ENCODE measurements at regions of chr1 and their contacts with region 1.

Region 1: GRCh38 chr1:27603681-27604578 is at the start of gene AHDC1:
- DNase-seq: peak; percentile 93
- ATAC-seq: peak; percentile 78
- H3K4me3 ChIP-seq: peak within 1 kb of the TSS; percentile 63 to 90 (median 79)
- H3K4me3 Mint-ChIP-seq: peak within 1 kb of the TSS; percentile 94
- H3K27ac ChIP-seq: peak within 1 kb of the TSS; percentile 32 to 74
- H3K27ac Mint-ChIP-seq: peak within 1 kb of the TSS; percentile 90
- H3K4me1 ChIP-seq: peaks cover 43 to 66% of the 10 kb centered on the region in 2 donors
- H3K4me1 Mint-ChIP-seq: peaks cover 50% of the 10 kb centered on the region
- H3K27me3 ChIP-seq: no peaks in the 10 kb centered on the region
- H3K27me3 Mint-ChIP-seq: no peaks in the 10 kb centered on the region
- CTCF ChIP-seq: no peak
- total RNA-seq, gene AHDC1: 29.9 and 32.0 TPM in 2 replicates

Region 2: GRCh38 chr1:27321813-27322577 is 281.9 kb before region 1 on chr1 and contains the start of gene TMEM222:
- CTCF ChIA-PET with region 1: interaction called, 4 read pairs
- POLR2A ChIA-PET with region 1: no interaction called
- intact Hi-C with region 1: loop called (anchors 1 kb)
- DNase-seq: peak; percentile 98
- ATAC-seq: peak; percentile 96
- H3K4me3 ChIP-seq: peak within 1 kb of the TSS; percentile 80 to 100 (median 98)
- H3K4me3 Mint-ChIP-seq: peak within 1 kb of the TSS; percentile 98
- H3K27ac ChIP-seq: peak within 1 kb of the TSS; percentile 94
- H3K27ac Mint-ChIP-seq: peak within 1 kb of the TSS; percentile 97
- H3K4me1 ChIP-seq: peaks cover 17 to 25% of the 10 kb centered on the region in 2 donors
- H3K4me1 Mint-ChIP-seq: peaks cover 51% of the 10 kb centered on the region
- H3K27me3 ChIP-seq: no peaks in the 10 kb centered on the region
- H3K27me3 Mint-ChIP-seq: peaks cover 12% of the 10 kb centered on the region
- CTCF ChIP-seq: no peak
- total RNA-seq, gene TMEM222: 44.2 and 48.7 TPM in 2 replicates

Region 3: DNA sequence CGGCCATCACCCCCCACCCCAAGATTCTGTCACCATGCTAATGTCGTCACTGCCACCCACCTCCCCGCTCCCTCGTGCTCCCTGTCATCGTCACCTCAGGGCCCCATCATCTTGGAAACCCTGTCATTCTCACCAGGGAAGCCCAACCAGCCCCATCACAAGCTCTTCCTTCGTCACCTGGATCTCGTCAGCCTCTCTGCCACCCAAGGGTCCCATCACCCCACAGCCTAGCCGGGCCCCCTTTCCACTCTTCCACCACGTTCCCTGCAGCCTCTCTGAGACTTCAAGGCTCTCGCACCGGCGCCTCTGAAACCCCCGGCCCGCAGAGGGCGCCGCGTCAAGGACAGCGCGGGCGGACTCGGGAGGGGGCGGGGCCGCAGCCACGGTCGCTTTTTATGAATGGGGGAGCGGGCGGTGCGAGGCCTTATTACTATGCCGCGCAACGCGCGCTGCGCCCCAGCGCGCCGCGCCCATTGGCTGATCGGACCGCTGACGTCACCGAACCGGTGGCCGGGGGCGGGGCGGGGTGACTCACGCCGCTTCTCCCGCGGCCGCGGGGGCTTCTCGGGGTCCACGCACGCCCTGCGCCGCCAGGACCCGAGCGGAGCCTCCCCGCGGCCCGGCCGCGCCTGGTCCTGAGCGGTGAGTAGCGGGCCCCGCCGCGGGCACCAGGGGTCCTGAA is 211.7 kb before region 1 on chr1 and contains the start of gene GPR3:
- CTCF ChIA-PET with region 1: interaction called, 135 read pairs
- POLR2A ChIA-PET with region 1: no interaction called
- intact Hi-C with region 1: loop called (anchors 1 kb)
- DNase-seq: peak; percentile 96
- ATAC-seq: peak; percentile 91
- H3K4me3 ChIP-seq: peak within 1 kb of the TSS in 4 of 5 experiments; percentile 34 to 60 (median 56)
- H3K4me3 Mint-ChIP-seq: peak within 1 kb of the TSS; percentile 81
- H3K27ac ChIP-seq: peak within 1 kb of the TSS in 1 of 2 donors; percentile 50
- H3K27ac Mint-ChIP-seq: peak within 1 kb of the TSS; percentile 67
- H3K4me1 ChIP-seq: peaks cover 12 to 24% of the 10 kb centered on the region in 2 donors
- H3K4me1 Mint-ChIP-seq: peaks cover 22% of the 10 kb centered on the region
- H3K27me3 ChIP-seq: no peaks in the 10 kb centered on the region
- H3K27me3 Mint-ChIP-seq: peaks cover 3% of the 10 kb centered on the region
- CTCF ChIP-seq: peak; percentile 65
- total RNA-seq, gene GPR3: not detected in 2 replicates

Region 4: GRCh38 chr1:27489910-27490741 is 113.8 kb before region 1 on chr1 and contains the start of gene WASF2:
- CTCF ChIA-PET with region 1: interaction called, 3 read pairs
- POLR2A ChIA-PET with region 1: interaction called, 8 read pairs
- intact Hi-C with region 1: loop called (anchors 2 kb)
- DNase-seq: peak; percentile 98
- ATAC-seq: peak; percentile 90
- H3K4me3 ChIP-seq: peak within 1 kb of the TSS; percentile 78 to 100 (median 99)
- H3K4me3 Mint-ChIP-seq: peak within 1 kb of the TSS; percentile 99
- H3K27ac ChIP-seq: peak within 1 kb of the TSS; percentile 89 to 95
- H3K27ac Mint-ChIP-seq: peak within 1 kb of the TSS; percentile 99
- H3K4me1 ChIP-seq: peaks cover 44 to 58% of the 10 kb centered on the region in 2 donors
- H3K4me1 Mint-ChIP-seq: peaks cover 57% of the 10 kb centered on the region
- H3K27me3 ChIP-seq: no peaks in the 10 kb centered on the region
- H3K27me3 Mint-ChIP-seq: no peaks in the 10 kb centered on the region
- CTCF ChIP-seq: no peak
- total RNA-seq, gene WASF2: 166 and 169 TPM in 2 replicates

Region 5: DNA sequence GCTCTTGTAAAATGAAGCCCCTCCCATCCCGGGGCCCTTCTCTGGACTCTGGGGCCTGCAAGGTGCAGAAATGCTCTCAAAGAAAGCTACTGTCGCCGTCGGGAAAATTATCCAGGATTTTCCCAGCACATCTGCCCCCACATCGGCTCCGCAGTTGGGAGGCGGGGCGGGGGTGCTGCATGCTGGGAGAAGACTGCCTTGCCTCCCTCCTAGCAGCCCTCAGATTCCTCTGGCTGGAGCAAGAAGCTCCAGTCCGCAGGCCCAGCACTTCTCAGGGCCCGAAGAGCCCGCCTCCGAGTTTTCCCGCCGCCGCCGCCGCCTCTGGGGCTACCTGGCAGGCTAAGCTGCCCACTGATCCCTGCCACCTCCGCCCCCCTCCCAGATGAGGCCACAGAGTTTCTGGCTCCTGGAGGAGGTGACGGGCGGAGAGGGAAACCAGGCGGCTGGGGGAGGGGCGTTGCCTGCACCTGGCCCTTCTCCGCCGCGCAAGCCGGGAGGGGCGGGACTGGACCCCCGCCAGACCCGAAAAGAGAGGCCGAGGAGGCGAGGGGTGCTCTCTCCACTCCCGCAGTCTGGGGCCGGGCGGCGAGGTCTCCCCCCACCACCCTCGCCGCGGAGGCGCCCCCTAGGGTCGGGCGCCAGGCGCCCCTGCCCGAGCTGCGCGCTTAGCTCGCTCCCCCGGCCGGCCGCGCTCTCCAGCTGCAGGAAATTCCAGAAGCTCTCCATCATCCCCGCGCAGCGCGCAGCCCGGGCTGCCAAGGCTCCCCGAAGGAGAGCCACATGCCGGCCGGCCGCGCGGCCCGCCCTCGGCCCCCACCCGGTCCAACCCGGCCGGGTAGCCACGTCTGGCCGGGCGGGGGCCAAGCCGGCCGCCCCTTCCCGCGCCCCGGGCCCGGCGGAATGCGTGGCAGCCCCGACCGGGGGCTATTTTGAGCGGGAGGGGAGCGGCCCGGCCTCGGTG is 28.8 kb before region 1 on chr1:
- CTCF ChIA-PET with region 1: interaction called, 60 read pairs
- POLR2A ChIA-PET with region 1: interaction called, 8 read pairs
- intact Hi-C with region 1: no loop called
- DNase-seq: peak; percentile 55
- ATAC-seq: peak; percentile 32
- H3K4me3 ChIP-seq: peak overlapping the region in 4 of 5 experiments; percentile 29 to 55 (median 48)
- H3K4me3 Mint-ChIP-seq: peak overlapping the region; percentile 50
- H3K27ac ChIP-seq: no peak overlapping the region
- H3K27ac Mint-ChIP-seq: no peak overlapping the region
- H3K4me1 ChIP-seq: peaks cover 14 to 35% of the 10 kb centered on the region in 2 donors
- H3K4me1 Mint-ChIP-seq: peaks cover 43% of the 10 kb centered on the region
- H3K27me3 ChIP-seq: peaks cover 0 to 4% (median 2%) of the 10 kb centered on the region in 4 experiments
- H3K27me3 Mint-ChIP-seq: no peaks in the 10 kb centered on the region
- CTCF ChIP-seq: peak; percentile 39

Region 6: GRCh38 chr1:27643701-27644625 is 40.0 kb after region 1 on chr1:
- CTCF ChIA-PET with region 1: interaction called, 38 read pairs
- POLR2A ChIA-PET with region 1: interaction called, 5 read pairs
- intact Hi-C with region 1: no loop called
- DNase-seq: peak; percentile 82
- ATAC-seq: peak; percentile 98
- H3K4me3 ChIP-seq: no peak overlapping the region
- H3K4me3 Mint-ChIP-seq: no peak overlapping the region
- H3K27ac ChIP-seq: no peak overlapping the region
- H3K27ac Mint-ChIP-seq: peak overlapping the region; percentile 74
- H3K4me1 ChIP-seq: peaks cover 10 to 17% of the 10 kb centered on the region in 2 donors
- H3K4me1 Mint-ChIP-seq: peaks cover 16% of the 10 kb centered on the region
- H3K27me3 ChIP-seq: no peaks in the 10 kb centered on the region
- H3K27me3 Mint-ChIP-seq: no peaks in the 10 kb centered on the region
- CTCF ChIP-seq: peak; percentile 85

Region 7: DNA sequence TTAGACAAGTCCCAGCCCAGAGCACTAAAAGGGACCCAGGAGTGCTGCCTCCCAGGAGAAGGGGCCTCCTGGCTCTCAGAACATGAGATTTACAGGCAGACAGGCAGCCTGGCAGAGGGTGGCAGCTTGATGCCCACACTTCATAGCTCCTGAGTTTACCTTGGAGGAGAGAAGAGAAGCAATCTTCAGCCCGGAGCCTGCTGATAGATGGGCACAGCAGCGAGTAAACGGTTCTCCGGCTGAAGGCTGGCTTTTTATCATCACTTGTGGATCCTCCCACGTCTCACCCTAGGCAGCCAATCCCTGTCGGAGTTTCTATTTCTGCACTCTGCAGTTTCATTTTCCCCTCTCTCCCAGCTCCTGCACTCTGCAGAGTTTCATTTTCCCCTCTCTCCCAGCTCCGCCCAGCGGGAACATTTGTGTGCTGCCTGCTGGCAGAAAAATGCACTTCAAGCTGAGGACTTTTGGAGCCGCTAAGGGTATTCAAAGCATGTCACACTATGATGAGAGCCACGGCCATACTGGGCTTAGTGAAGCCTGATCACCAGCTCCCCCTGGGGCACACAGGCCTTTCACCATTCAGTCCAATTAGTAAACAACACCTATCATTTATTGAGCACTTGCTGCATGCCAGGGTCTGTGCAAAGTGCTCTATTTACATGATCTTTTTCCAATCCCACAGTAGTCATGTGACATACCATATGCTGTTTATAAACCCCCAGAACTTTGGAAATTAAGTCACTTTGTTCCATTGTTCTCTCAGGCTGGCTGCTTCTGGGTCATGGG is 68.2 kb after region 1 on chr1 and contains the start of gene IFI6:
- CTCF ChIA-PET with region 1: interaction called, 473 read pairs
- POLR2A ChIA-PET with region 1: interaction called, 3 read pairs
- intact Hi-C with region 1: no loop called
- DNase-seq: peak; percentile 83
- ATAC-seq: peak; percentile 90
- H3K4me3 ChIP-seq: peak within 1 kb of the TSS; percentile 59 to 85 (median 75)
- H3K4me3 Mint-ChIP-seq: peak within 1 kb of the TSS; percentile 93
- H3K27ac ChIP-seq: peak within 1 kb of the TSS; percentile 84 to 89
- H3K27ac Mint-ChIP-seq: peak within 1 kb of the TSS; percentile 97
- H3K4me1 ChIP-seq: peaks cover 14 to 24% of the 10 kb centered on the region in 2 donors
- H3K4me1 Mint-ChIP-seq: peaks cover 26% of the 10 kb centered on the region
- H3K27me3 ChIP-seq: no peaks in the 10 kb centered on the region
- H3K27me3 Mint-ChIP-seq: no peaks in the 10 kb centered on the region
- CTCF ChIP-seq: peak; percentile 45
- total RNA-seq, gene IFI6: 12.0 and 12.7 TPM in 2 replicates

Measured in B cell (primary cell).